Transverse colon (tissue), 4 donors: ENCODE measurements at regions of chr12 and their contacts with region 1.

Region 1: GRCh38 chr12:39294715-39295114 is 148.2 kb downstream of the KIF21A start:
- DNase-seq: no peak
- H3K4me3 ChIP-seq: no peak overlapping the region
- H3K27ac ChIP-seq: no peak overlapping the region
- H3K4me1 ChIP-seq: no peaks in the 10 kb centered on the region
- H3K27me3 ChIP-seq: no peaks in the 10 kb centered on the region
- CTCF ChIP-seq: no peak
- EP300 ChIP-seq: no peak
- POLR2A ChIP-seq: no peak

Region 2: DNA sequence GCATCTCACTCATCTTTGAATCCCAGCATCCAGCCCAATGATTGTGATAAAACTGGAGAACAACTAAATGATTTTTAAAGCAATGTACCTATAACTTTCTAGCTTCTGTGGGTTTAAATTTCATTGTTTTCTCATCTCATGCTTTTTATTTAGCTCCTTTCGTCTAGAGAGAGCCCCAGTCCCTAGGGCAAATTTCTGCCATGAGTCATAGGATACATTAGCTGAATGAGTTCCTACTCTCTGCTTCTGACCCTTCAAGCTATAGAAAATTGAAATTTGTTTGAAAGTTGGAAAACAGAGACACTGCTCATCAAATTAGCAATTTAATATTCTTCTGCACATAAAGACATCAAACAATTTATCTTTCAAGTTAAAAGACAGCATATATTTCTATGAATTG is 34.3 kb after region 1 on chr12:
- in situ Hi-C with region 1: no loop called
- intact Hi-C with region 1: no loop called
- DNase-seq: no peak
- H3K4me3 ChIP-seq: no peak overlapping the region
- H3K27ac ChIP-seq: no peak overlapping the region
- H3K4me1 ChIP-seq: no peaks in the 10 kb centered on the region
- H3K27me3 ChIP-seq: no peaks in the 10 kb centered on the region
- CTCF ChIP-seq: no peak
- EP300 ChIP-seq: no peak
- POLR2A ChIP-seq: no peak

Region 3: DNA sequence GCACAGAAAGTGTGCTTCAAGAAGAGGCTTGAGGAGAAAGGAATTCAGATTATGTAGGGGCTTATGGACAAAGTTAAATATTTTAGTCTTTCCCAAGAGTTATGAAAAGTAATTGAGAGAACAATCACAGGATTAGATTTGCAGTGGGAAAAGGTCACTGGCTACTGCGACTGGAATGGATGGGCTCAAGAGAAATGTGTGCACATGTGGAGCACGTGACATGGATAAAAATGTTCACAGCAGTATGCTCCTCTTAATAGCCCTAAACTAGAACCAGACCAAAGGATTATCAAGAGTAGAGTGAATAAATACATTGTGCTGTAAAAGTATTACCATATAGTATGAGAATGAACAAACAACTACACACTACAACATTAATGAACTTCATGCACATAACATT is 246.8 kb after region 1 on chr12:
- in situ Hi-C with region 1: no loop called
- intact Hi-C with region 1: no loop called
- DNase-seq: no peak
- H3K4me3 ChIP-seq: no peak overlapping the region
- H3K27ac ChIP-seq: no peak overlapping the region
- H3K4me1 ChIP-seq: no peaks in the 10 kb centered on the region
- H3K27me3 ChIP-seq: no peaks in the 10 kb centered on the region
- CTCF ChIP-seq: no peak
- EP300 ChIP-seq: no peak
- POLR2A ChIP-seq: no peak

Region 4: DNA sequence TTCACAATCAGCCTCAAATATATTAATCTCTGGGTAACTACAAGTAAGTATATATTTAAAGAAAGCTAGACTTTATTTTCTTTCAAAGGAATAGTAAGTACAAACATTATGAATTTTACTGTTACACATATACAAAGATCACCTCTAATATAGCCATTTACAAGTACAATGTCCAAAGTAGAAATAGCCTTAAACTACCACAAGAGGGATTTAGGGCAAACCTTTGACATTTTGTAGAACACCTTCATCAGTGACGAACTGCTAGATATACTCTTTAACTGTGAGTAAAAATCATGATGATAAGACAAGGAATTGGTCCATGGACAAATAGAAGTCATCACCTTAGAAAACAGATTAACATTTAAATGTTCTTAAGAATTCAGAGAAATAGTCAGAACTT is 1467.4 kb after region 1 on chr12:
- in situ Hi-C with region 1: no loop called
- intact Hi-C with region 1: loop called (anchors 5 kb)
- DNase-seq: no peak
- H3K4me3 ChIP-seq: no peak overlapping the region
- H3K27ac ChIP-seq: no peak overlapping the region
- H3K4me1 ChIP-seq: no peaks in the 10 kb centered on the region
- H3K27me3 ChIP-seq: no peaks in the 10 kb centered on the region
- CTCF ChIP-seq: no peak
- EP300 ChIP-seq: no peak
- POLR2A ChIP-seq: no peak